ENCODE measurements at regions of chr10 and their contacts with region 1.

Region 1: GRCh38 chr10:70925377-70926225 is 37.2 kb upstream of the PCBD1 start:
- DNase-seq: peak; percentile 25 to 61
- H3K4me3 ChIP-seq: no peak overlapping the region
- H3K27ac ChIP-seq: no peak overlapping the region
- H3K4me1 ChIP-seq: peaks cover 0 to 4% of the 10 kb centered on the region in 2 donors
- H3K27me3 ChIP-seq: no peaks in the 10 kb centered on the region
- CTCF ChIP-seq: peak; percentile 80 to 93 (median 88)
- POLR2A ChIP-seq: no peak

Region 2: GRCh38 chr10:69839696-69840345 is 1085.8 kb before region 1 on chr10:
- intact Hi-C with region 1: no loop called
- DNase-seq: no peak
- H3K4me3 ChIP-seq: no peak overlapping the region
- H3K27ac ChIP-seq: no peak overlapping the region
- H3K4me1 ChIP-seq: no peaks in the 10 kb centered on the region
- H3K27me3 ChIP-seq: no peaks in the 10 kb centered on the region
- CTCF ChIP-seq: no peak
- POLR2A ChIP-seq: no peak

Region 3: DNA sequence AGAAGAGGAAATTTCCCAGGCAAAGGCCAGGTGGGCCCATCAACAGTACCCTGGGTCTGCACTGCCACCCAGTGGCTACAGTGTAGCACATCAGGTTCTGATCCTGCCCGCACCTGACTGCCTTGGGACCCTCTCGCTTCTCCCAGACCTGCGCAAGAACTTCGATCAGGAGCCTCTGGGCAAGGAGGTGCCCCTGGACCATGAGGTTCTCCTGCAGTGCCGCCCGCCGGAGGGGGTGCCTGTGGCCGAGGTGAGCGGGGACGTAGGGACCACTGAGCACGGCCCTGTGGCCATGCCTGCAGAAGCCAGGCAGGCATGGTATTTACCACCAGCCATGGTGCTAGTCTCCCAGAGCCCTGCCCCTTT is 359.6 kb after region 1 on chr10:
- intact Hi-C with region 1: loop called (anchors 5 kb)
- DNase-seq: peak in 1 of 2 donors; percentile 58
- H3K4me3 ChIP-seq: no peak overlapping the region
- H3K27ac ChIP-seq: no peak overlapping the region
- H3K4me1 ChIP-seq: no peaks in the 10 kb centered on the region
- H3K27me3 ChIP-seq: no peaks in the 10 kb centered on the region
- CTCF ChIP-seq: peak; percentile 65 to 89 (median 80)
- POLR2A ChIP-seq: no peak

Measured in uterus (tissue), 4 donors.